RWPE1 (cell line): ENCODE measurements at regions of chr17 and their contacts with region 1.

Region 1: GRCh38 chr17:64025732-64026294 is 5.4 kb upstream of the ICAM2 start:
- DNase-seq: peak; percentile 44
- H3K27ac ChIP-seq: no peak overlapping the region
- CTCF ChIP-seq: peak; percentile 97

Region 2: GRCh38 chr17:63842540-63843386 is 183.1 kb before region 1 on chr17 and contains the start of gene SMARCD2:
- CTCF ChIA-PET with region 1: no interaction called
- POLR2A ChIA-PET with region 1: no interaction called
- DNase-seq: peak; percentile 95
- H3K27ac ChIP-seq: peak within 1 kb of the TSS; percentile 93
- CTCF ChIP-seq: no peak

Region 3: GRCh38 chr17:64038314-64039105 is 12.7 kb after region 1 on chr17:
- CTCF ChIA-PET with region 1: interaction called, 11 read pairs
- POLR2A ChIA-PET with region 1: interaction called, 3 read pairs
- DNase-seq: no peak
- H3K27ac ChIP-seq: no peak overlapping the region
- CTCF ChIP-seq: no peak

Region 4: GRCh38 chr17:64129764-64130558 is 104.1 kb after region 1 on chr17 and contains the start of gene ERN1:
- CTCF ChIA-PET with region 1: interaction called, 103 read pairs
- POLR2A ChIA-PET with region 1: no interaction called
- DNase-seq: peak; percentile 90
- H3K27ac ChIP-seq: peak within 1 kb of the TSS; percentile 82
- CTCF ChIP-seq: no peak